ENCODE measurements at regions of chr7 and their contacts with region 1.

Region 1: GRCh38 chr7:101815835-101816493 is 1.5 kb upstream of the CUX1 start:
- DNase-seq: peak; percentile 61 to 76
- H3K4me3 ChIP-seq: peak overlapping the region; percentile 51; the same call in 1 of the 2 replicates
- H3K27ac ChIP-seq: no peak overlapping the region
- H3K4me1 ChIP-seq: peaks cover 15% of the 10 kb centered on the region
- H3K27me3 ChIP-seq: no peaks in the 10 kb centered on the region
- CTCF ChIP-seq: no peak

Region 2: DNA sequence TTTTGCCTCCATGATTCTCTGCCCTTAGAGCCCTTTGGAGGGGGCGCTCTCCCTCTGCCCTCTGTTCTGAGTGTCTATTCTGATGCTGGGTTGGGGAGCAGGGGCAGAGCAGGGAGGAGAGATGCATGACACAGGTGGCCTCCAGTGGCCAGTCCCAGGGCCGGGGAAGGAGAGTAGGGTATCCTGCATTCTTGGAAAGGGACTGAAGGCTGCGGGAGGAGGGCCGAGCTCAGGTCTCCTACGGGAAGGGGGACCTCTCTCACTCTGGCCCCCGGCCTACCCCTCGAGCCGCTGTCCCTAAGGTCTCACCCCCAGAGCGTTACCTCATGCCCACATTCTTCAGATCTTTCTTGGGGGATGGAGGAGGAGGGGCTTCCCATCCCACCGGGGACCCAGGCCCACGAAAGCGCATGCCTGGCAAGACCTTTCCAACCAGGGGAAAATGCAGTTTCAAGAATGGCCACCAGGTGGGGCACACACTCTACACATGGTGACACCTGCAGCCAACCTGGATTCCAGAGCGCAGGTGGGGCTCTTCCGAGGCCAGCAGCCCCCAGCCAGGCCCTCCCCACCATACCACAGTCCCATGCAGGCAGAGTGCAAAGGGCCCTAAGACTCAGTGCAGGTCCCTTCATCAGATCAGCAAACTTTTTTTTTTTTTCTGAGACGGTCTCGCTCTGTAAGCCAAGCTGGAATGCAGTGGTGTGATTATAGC is 273.3 kb before region 1 on chr7:
- CTCF ChIA-PET with region 1: interaction called, 7 read pairs
- POLR2A ChIA-PET with region 1: no interaction called
- intact Hi-C with region 1: loop called (anchors 2 kb)
- DNase-seq: peak in 1 of 2 experiments; percentile 77
- H3K4me3 ChIP-seq: no peak overlapping the region
- H3K27ac ChIP-seq: no peak overlapping the region
- H3K4me1 ChIP-seq: no peaks in the 10 kb centered on the region
- H3K27me3 ChIP-seq: no peaks in the 10 kb centered on the region
- CTCF ChIP-seq: peak; percentile 98

Region 3: GRCh38 chr7:101688183-101688831 is 127.7 kb before region 1 on chr7:
- CTCF ChIA-PET with region 1: interaction called, 7 read pairs
- POLR2A ChIA-PET with region 1: no interaction called
- intact Hi-C with region 1: loop called (anchors 1 kb)
- DNase-seq: peak in 1 of 2 experiments; percentile 79
- H3K4me3 ChIP-seq: peak overlapping the region; percentile 38; the same call in 1 of the 2 replicates
- H3K27ac ChIP-seq: no peak overlapping the region
- H3K4me1 ChIP-seq: peaks cover 4% of the 10 kb centered on the region
- H3K27me3 ChIP-seq: no peaks in the 10 kb centered on the region
- CTCF ChIP-seq: peak; percentile 96

Region 4: GRCh38 chr7:101749891-101750290 is 66.1 kb before region 1 on chr7:
- CTCF ChIA-PET with region 1: no interaction called
- POLR2A ChIA-PET with region 1: no interaction called
- intact Hi-C with region 1: no loop called
- DNase-seq: no peak
- H3K4me3 ChIP-seq: no peak overlapping the region
- H3K27ac ChIP-seq: no peak overlapping the region
- H3K4me1 ChIP-seq: no peaks in the 10 kb centered on the region
- H3K27me3 ChIP-seq: no peaks in the 10 kb centered on the region
- CTCF ChIP-seq: no peak

Region 5: DNA sequence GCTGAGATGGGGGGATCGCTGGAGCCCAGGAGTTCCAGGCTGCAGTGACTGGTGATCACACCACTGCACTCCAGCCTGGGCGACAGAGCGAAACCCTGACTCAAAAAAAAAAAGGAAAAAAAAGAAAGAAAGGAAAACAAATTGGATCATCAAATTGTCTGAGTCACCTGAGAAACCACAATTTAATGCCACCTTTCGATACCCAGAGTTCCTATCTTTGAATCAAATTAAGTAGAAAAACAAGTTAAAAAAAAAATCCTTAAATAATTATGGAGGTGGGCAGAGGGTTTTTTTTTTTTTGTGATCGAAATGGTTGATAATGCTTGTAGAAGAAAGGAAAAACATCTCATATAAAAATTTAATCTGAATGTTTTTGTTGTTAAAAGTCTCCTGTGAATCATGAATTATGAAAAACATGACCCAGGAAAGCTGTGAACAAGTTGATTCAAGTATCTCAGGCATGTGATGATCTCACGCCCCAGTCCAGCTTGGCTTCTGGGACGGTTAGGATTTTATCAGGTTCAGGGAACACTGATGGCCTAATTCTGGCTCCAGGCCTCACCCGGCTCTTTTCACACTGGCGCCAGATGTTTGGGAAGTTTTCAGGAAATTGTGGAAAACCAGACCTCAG is 23.8 kb before region 1 on chr7:
- CTCF ChIA-PET with region 1: interaction called, 4 read pairs
- POLR2A ChIA-PET with region 1: no interaction called
- intact Hi-C with region 1: loop called (anchors 1 kb)
- DNase-seq: peak; percentile 66 to 84
- H3K4me3 ChIP-seq: no peak overlapping the region; the same call in 1 of the 2 replicates
- H3K27ac ChIP-seq: peak overlapping the region; percentile 89
- H3K4me1 ChIP-seq: peaks cover 21% of the 10 kb centered on the region
- H3K27me3 ChIP-seq: no peaks in the 10 kb centered on the region
- CTCF ChIP-seq: no peak

Region 6: DNA sequence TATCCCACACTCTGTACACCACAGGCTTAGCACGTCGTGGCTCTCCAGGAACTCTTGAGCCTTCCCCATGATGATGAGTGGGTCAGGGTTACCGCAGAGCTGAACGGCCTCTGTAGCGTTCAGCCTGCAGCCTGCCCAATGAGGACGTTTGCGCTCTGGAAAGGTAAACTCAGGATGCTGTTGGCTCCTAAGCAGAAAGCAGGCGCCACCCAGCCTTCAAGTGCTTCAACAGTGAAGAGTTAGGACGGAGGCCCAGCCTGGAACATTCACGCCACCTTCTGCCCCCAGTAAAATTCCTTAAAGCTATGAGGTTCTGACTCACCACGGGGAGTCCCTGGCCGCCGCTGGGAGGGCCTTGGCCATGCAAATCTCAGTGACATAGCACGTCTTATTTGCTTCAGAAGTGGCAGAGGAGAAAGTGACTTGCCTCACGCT is 309.2 kb after region 1 on chr7:
- CTCF ChIA-PET with region 1: no interaction called
- POLR2A ChIA-PET with region 1: interaction called, 3 read pairs
- intact Hi-C with region 1: loop called (anchors 1 kb)
- DNase-seq: peak; percentile 68 to 90
- H3K4me3 ChIP-seq: no peak overlapping the region
- H3K27ac ChIP-seq: no peak overlapping the region
- H3K4me1 ChIP-seq: peaks cover 14% of the 10 kb centered on the region
- H3K27me3 ChIP-seq: no peaks in the 10 kb centered on the region
- CTCF ChIP-seq: no peak

Region 7: DNA sequence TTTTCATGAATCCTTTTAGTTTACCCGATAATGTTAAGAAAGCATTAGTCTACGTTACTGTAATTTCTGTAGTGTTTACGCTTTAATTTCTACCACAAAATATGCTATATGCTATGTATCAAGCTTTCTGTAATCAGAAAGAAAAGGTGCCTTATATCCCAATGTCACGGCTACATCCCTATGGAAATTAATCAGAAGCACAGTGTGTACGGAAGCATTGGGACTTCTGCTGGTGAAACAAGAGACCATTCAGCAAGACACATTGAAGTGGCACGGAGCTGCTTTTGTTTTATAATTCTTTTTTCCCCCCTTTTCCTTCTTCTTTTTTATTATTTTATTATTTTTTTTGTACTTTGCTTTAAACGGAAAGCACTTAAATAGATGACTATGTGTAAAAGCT is 439.5 kb after region 1 on chr7:
- CTCF ChIA-PET with region 1: no interaction called
- POLR2A ChIA-PET with region 1: interaction called, 20 read pairs
- intact Hi-C with region 1: no loop called
- DNase-seq: no peak
- H3K4me3 ChIP-seq: no peak overlapping the region
- H3K27ac ChIP-seq: no peak overlapping the region
- H3K4me1 ChIP-seq: no peaks in the 10 kb centered on the region
- H3K27me3 ChIP-seq: no peaks in the 10 kb centered on the region
- CTCF ChIP-seq: no peak

Measured in PC-9 (cell line).